IMR-90 (cell line): ENCODE measurements at regions of chr12 and their contacts with region 1.

Region 1: GRCh38 chr12:122917504-122918121 is 21.7 kb upstream of the VPS37B start:
- DNase-seq: peak; percentile 73
- ATAC-seq: peak; percentile 30
- H3K4me3 ChIP-seq: no peak overlapping the region
- H3K27ac ChIP-seq: peak overlapping the region; percentile 41; the same call in 1 of the 2 replicates
- H3K4me1 ChIP-seq: peaks cover 18% of the 10 kb centered on the region; the same call in 1 of the 2 replicates
- H3K27me3 ChIP-seq: no peaks in the 10 kb centered on the region
- CTCF ChIP-seq: no peak
- POLR2A ChIP-seq: no peak
- RAD21 ChIP-seq: no peak

Region 2: DNA sequence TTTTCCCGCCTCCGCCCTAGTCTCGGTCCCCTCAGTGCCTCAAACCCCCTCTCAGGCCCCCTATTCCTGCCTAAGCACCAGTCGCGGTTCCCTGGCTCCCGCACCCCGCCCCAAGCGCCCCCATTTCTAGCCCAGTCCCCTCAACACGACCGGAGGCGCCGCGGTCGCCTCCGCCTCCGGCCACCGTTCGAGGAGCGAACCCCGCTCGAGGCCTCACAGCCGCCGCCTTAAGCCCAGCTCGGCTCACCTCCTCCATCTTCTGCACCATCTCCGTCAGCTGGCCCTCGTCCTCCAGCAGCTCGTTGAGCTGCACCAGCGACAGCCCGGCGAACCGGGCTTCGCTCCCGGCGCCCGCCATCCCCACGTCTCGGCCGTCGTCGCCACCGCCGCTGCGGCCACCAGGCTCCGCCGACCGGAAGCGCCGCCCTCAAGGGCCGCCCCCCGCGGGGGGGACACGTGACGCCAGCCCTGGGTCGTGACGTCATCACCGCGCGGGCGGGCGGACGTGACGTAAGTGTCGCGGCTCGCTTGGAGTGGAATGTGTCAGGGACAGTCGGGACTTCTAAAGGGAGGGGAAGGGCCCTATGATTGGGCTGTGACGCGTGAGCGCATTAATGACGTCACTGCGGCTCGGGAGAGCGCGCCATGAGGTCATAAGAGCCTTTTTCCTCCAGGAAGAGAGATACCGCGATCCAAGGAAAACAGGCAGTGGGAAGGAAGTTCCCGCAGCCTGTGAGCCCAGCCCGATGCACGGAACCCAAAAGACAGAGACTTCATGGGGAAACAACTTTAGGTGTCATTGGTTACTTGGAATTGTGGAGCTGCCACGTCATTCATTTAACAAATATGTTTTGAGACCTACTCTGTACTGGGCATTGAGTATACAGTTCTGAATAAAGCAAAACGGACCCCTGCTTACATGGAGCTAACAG is 21.6 kb before region 1 on chr12 and contains the start of gene VPS37B:
- CTCF ChIA-PET with region 1: no interaction called
- POLR2A ChIA-PET with region 1: no interaction called
- dilution Hi-C with region 1: no loop called
- in situ Hi-C with region 1: no loop called
- intact Hi-C with region 1: loop called (anchors 2 kb)
- DNase-seq: peak; percentile 90
- ATAC-seq: peak; percentile 55
- H3K4me3 ChIP-seq: peak within 1 kb of the TSS; percentile 97
- H3K27ac ChIP-seq: peak within 1 kb of the TSS; percentile 93
- H3K4me1 ChIP-seq: peaks cover 19% of the 10 kb centered on the region
- H3K27me3 ChIP-seq: no peaks in the 10 kb centered on the region
- CTCF ChIP-seq: no peak
- POLR2A ChIP-seq: peak; percentile 95
- RAD21 ChIP-seq: no peak
- total RNA-seq, gene VPS37B: 8.6 and 13.9 TPM in 2 replicates